ENCODE measurements at regions of chr3 and their contacts with region 1.

Region 1: DNA sequence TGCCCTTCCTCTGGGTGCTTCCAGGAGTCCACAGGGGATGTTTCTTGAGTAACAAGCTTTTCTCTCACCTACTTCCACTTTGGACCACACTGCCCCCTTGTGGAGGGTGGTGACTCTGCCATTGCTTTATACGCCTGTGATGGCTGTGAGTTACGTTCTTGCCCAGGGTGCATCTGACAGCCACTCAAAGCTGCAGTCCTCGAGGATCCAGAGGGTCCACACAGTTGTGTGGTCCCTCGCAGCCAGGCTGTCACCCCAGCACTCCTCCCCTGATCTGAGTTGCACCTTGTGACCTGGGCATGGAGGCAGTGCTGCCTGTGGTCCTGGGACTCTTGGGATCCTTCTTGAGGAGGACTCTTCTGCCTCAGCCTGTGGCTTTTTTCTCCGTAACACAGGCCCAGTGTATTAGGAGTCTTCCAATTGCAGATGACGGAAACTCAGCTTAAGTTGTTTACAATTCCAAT is 23.4 kb downstream of the FOXL2 start:
- DNase-seq: peak; percentile 67
- H3K4me3 ChIP-seq: no peak overlapping the region
- H3K27ac ChIP-seq: no peak overlapping the region
- H3K27me3 ChIP-seq: peaks cover 8% of the 10 kb centered on the region
- CTCF ChIP-seq: peak; percentile 96

Region 2: DNA sequence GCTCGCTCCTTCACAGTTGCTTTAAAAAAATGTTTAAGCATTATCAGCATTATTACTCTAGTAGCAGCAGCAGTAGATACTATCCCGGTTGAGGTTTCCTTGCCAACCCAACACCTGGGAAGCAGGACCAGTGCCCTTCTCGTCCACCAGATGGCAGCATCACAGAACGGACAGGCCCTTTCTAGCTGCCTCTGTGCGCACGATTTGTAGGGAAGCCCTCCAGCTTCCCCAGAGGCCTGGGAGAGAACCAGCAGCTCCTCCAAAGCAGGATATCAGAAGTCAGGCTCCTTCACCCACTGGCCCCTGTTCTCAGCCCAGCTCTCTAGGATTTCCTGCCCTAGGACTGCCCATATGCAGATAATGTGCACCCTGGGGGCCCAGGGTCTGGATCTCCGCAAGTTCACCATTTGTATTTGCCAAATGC is 506.0 kb before region 1 on chr3:
- CTCF ChIA-PET with region 1: interaction called, 90 read pairs
- POLR2A ChIA-PET with region 1: no interaction called
- DNase-seq: peak; percentile 67
- H3K4me3 ChIP-seq: no peak overlapping the region
- H3K27ac ChIP-seq: no peak overlapping the region
- H3K27me3 ChIP-seq: peaks cover 7% of the 10 kb centered on the region
- CTCF ChIP-seq: peak; percentile 98

Region 3: DNA sequence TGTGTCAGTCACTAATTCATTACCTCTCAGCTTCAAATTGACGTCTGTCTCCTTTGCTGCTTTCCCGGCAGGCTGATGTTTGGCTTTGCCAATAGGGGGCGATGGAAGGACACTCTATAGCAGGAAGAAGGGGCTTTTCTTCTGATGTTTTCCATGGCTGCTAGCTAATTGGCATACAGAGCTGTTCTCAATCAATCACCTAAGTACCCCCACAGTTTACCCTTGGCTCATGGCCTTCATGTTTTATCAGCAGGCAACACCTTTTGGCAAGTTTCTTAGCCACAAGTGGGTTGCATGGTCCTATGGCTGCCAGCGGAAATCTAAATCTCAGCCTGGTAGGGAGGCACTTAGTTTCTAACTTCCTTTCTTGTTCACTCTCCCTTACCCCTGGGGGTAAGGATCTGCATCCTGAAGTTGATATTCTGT is 444.1 kb before region 1 on chr3:
- CTCF ChIA-PET with region 1: interaction called, 154 read pairs
- POLR2A ChIA-PET with region 1: no interaction called
- DNase-seq: no peak
- H3K4me3 ChIP-seq: no peak overlapping the region
- H3K27ac ChIP-seq: no peak overlapping the region
- H3K27me3 ChIP-seq: no peaks in the 10 kb centered on the region
- CTCF ChIP-seq: peak; percentile 95

Region 4: GRCh38 chr3:138608322-138609135 is 315.0 kb before region 1 on chr3 and contains the start of gene FAIM:
- CTCF ChIA-PET with region 1: interaction called, 12 read pairs
- POLR2A ChIA-PET with region 1: no interaction called
- DNase-seq: peak; percentile 18
- H3K4me3 ChIP-seq: peak within 1 kb of the TSS; percentile 65
- H3K27ac ChIP-seq: peak within 1 kb of the TSS; percentile 70
- H3K27me3 ChIP-seq: no peaks in the 10 kb centered on the region
- CTCF ChIP-seq: no peak
- polyA plus RNA-seq, gene FAIM: 4.5 and 5.7 TPM in 2 replicates

Region 5: GRCh38 chr3:138875754-138876664 is 47.6 kb before region 1 on chr3:
- CTCF ChIA-PET with region 1: interaction called, 12 read pairs
- POLR2A ChIA-PET with region 1: no interaction called
- DNase-seq: no peak
- H3K4me3 ChIP-seq: no peak overlapping the region
- H3K27ac ChIP-seq: no peak overlapping the region
- H3K27me3 ChIP-seq: no peaks in the 10 kb centered on the region
- CTCF ChIP-seq: no peak

Region 6: GRCh38 chr3:138935848-138936740 is 12.5 kb after region 1 on chr3:
- CTCF ChIA-PET with region 1: interaction called, 85 read pairs
- POLR2A ChIA-PET with region 1: interaction called, 4 read pairs
- DNase-seq: no peak
- H3K4me3 ChIP-seq: peak overlapping the region; percentile 55
- H3K27ac ChIP-seq: no peak overlapping the region
- H3K27me3 ChIP-seq: peaks cover 76% of the 10 kb centered on the region
- CTCF ChIP-seq: peak; percentile 77

Region 7: GRCh38 chr3:139020868-139021234 is 97.3 kb after region 1 on chr3 and contains the start of gene PRR23B:
- CTCF ChIA-PET with region 1: no interaction called
- POLR2A ChIA-PET with region 1: no interaction called
- DNase-seq: no peak
- H3K4me3 ChIP-seq: no peak within 1 kb of the TSS
- H3K27ac ChIP-seq: no peak within 1 kb of the TSS
- H3K27me3 ChIP-seq: no peaks in the 10 kb centered on the region
- CTCF ChIP-seq: no peak
- polyA plus RNA-seq, gene PRR23B: not detected in 2 replicates